ENCODE measurements at regions of chr12 and their contacts with region 1.

Region 1: DNA sequence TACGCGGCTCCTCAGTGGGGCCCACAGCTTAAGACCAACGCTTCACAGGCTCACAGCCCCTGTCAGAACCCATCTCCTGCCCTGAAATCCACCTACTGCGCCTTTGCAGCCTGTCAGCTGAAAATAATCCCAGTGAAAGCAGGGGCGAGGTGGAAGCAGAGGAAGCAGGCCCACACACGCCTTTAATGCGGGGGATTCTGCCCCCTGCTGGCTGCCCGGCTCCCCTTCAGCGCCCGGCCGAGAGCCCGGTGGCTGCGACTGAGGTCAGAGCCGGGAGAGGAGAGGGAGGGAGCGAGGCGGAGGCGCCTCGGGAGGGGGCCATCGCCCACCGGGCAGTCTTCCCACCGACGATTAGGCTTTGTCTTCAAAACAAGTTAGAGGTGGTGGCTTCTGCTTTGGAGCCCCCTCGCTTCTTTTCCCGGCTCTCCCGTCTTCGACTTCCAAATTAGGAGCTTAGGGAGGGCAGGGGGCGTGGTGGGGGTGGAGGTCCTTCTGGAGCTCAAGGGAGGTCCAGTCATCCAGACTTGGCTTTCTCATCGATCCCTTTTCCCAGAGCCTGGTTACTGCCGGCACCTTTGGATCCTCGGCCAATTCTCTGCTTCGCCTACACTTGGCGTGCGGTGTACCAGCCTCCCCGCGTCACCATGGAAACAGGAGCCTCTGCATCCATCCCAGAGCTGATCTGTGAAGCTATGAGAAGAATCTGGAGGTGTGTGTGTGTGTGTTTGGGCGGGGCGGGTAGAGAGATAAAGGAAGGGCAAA is 25.2 kb upstream of the RND1 start:
- DNase-seq: peak; percentile 94

Region 2: GRCh38 chr12:48851883-48852733 is 38.7 kb before region 1 on chr12 and contains the start of gene DDX23:
- intact Hi-C with region 1: loop called (anchors 2 kb)
- DNase-seq: peak; percentile 98
- total RNA-seq, gene DDX23: 40.7 to 48.6 TPM

Region 3: GRCh38 chr12:48910196-48910595 is 19.4 kb after region 1 on chr12:
- intact Hi-C with region 1: no loop called
- DNase-seq: no peak